AG04450 (cell line): ENCODE measurements at regions of chr17 and their contacts with region 1.

Region 1: GRCh38 chr17:43352579-43353331 is 46.0 kb upstream of the ARL4D start:
- DNase-seq: no peak
- H3K4me3 ChIP-seq: no peak overlapping the region
- H3K27ac ChIP-seq: no peak overlapping the region
- H3K27me3 ChIP-seq: no peaks in the 10 kb centered on the region
- CTCF ChIP-seq: no peak

Region 2: DNA sequence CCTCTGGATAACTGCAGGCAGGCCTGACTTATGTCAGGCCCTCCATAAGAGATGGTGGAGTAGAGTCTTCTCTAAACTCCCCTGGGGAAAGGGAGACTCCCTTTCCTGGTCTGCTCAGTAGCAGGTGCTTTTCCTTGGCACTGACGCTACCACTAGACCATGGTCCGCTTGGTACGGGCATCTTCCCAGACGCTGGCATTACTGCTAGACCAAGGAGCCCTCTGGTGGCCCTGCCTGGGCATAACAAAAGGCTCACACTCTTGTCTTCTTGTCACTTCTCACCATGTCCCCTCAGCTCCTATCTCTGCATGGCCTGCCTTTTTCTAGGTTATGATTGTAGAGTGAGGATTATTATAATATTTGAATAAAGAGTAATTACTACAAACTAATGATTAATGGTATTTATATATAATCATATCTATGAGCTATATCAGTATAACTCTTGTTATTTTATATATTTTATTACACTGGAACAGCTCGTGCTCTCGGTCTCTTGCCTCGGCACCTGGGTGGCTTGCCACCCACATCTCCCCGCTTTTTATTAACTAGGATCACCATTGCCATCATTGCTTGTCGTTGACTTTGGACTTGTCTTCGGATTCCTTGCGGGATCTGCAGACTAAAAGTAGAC is 13.8 kb before region 1 on chr17:
- CTCF ChIA-PET with region 1: interaction called, 12 read pairs
- POLR2A ChIA-PET with region 1: interaction called, 4 read pairs
- DNase-seq: no peak
- H3K4me3 ChIP-seq: no peak overlapping the region
- H3K27ac ChIP-seq: no peak overlapping the region
- H3K27me3 ChIP-seq: no peaks in the 10 kb centered on the region
- CTCF ChIP-seq: peak; percentile 77

Region 3: DNA sequence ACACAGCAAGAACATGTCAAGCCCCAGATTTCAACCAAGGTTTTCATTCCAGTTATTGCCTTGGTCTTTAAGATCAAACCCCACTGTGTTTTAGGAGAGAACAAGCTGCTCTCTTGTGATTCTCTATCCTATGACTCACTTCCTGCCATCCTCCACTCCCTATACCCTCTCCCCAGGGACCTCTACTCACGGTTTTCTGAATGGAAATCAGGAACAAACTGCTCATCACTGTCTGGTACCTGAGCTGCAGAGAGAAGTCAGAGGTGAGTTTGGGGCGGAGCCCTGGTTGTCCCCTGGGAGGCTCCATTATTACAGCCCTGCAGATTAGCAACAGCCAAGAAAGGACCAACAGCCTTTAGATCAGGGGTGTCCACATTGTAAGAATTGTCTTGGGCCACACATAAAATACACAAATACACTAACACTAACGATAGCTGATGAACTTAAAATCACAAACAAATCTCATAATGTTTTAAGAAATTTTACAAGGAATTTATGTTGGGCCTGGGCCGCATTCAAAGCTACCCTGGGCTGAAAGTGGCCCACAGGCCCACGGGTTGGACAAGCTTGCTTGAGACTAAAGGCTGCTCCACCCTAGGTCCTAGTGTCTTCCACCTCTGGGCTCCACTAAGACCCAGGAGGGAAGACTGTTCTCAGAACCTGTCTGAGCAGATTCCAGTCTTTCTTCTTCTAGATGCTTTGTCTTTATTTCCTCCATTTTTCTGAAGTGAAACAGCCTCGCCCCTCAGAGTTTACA is 183.7 kb after region 1 on chr17:
- CTCF ChIA-PET with region 1: no interaction called
- POLR2A ChIA-PET with region 1: no interaction called
- DNase-seq: no peak
- H3K4me3 ChIP-seq: no peak overlapping the region
- H3K27ac ChIP-seq: peak overlapping the region; percentile 39
- H3K27me3 ChIP-seq: no peaks in the 10 kb centered on the region
- CTCF ChIP-seq: no peak